ENCODE measurements at regions of chr3 and their contacts with region 1.

Region 1: GRCh38 chr3:46895204-46895660 is 17.7 kb downstream of the PTH1R start:
- DNase-seq: peak; percentile 54 to 71
- H3K4me3 ChIP-seq: no peak overlapping the region
- H3K27ac ChIP-seq: no peak overlapping the region
- H3K4me1 ChIP-seq: no peaks in the 10 kb centered on the region
- H3K27me3 ChIP-seq: peaks cover 0 to 7% of the 10 kb centered on the region in 2 donors
- CTCF ChIP-seq: peak; percentile 77 to 90 (median 83)
- POLR2A ChIP-seq: no peak

Region 2: GRCh38 chr3:46705022-46705530 is 190.2 kb before region 1 on chr3:
- intact Hi-C with region 1: loop called (anchors 10 kb)
- DNase-seq: peak; percentile 69 to 80
- H3K4me3 ChIP-seq: no peak overlapping the region
- H3K27ac ChIP-seq: no peak overlapping the region
- H3K4me1 ChIP-seq: peaks cover 4 to 10% of the 10 kb centered on the region in 2 donors
- H3K27me3 ChIP-seq: no peaks in the 10 kb centered on the region
- CTCF ChIP-seq: peak; percentile 97
- POLR2A ChIP-seq: no peak

Measured in breast epithelium (tissue), 4 donors.